ENCODE measurements at regions of chr14 and their contacts with region 1.

Region 1: DNA sequence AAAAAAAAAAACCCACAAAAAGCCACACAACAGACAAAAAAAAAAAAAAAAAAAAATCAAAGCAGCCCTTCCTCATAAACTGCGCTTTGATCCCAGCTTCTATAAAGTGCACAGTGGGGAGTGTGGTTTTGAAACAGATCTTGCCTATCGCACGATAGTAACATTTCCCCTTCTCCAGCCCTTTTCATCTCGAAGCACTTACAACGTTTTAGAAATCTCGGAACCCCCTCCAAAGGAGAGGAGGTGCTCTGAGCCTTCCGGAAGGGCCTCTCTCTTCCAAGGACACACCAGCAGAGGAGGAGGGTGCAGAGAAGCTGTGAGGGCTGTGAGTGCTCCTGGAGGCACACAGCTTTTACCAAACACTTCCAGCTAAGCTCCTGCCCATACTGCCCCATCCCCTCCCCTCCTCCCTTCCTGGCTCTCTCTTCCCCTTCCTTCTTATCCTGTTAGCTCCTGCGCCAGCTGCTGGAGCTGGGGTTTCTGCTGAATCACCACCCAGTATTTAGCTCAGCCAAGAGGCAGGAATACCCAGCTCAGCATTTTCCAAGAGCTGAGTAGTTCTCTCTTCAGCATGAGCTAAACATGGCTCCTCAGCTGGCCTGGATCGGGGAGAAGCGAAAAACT is 28.4 kb downstream of the SLC7A8 start:
- DNase-seq: peak; percentile 74 to 91 (median 79)
- ATAC-seq: peak; percentile 70 to 86 (median 84)
- H3K4me3 ChIP-seq: peak overlapping the region in 9 of 12 donors; percentile 29 to 52 (median 40)
- H3K27ac ChIP-seq: peak overlapping the region; percentile 81 to 96 (median 90)
- H3K4me1 ChIP-seq: peaks cover 6 to 39% (median 30%) of the 10 kb centered on the region in 12 donors
- H3K27me3 ChIP-seq: no peaks in the 10 kb centered on the region
- CTCF ChIP-seq: no peak
- POLR2A ChIP-seq: peak in 1 of 2 donors; percentile 34

Region 2: DNA sequence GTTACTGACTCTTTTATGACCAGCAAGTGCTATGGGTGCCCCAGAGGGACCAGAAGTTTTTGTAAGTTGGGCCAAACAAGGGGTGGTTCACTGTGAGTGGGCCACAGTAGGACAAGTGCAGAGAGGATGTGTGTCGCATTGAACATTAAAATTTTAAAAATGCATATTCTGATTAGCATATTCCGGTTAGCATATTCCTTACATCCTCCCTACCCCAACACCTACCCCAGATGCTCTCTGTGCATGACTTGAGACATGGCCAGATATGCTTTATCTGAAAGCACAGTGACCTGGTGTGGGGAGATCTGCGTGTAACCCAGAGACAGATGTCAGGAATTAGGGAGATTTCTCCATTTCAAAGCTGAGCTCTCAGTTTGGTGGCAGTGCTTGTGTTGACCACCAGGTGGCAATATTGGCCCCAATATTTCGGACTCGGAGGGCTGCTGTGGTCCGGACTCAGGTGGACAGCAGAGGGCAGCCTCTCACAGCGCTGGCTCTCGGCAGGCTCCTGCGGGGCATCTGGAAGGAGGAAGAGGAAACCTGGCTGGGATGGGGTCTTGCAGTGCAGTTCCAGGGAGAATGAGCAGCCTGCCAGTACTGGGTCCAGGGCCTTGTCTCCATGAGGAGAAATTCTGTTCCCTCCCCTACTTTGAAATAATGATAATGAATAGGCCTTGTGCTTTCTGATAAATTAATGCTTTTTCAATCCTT is 34.4 kb before region 1 on chr14:
- intact Hi-C with region 1: loop called in 3 of 10 experiments (anchors 2 to 5 kb)
- DNase-seq: peak; percentile 88 to 94 (median 90)
- ATAC-seq: peak; percentile 75 to 86 (median 80)
- H3K4me3 ChIP-seq: no peak overlapping the region
- H3K27ac ChIP-seq: peak overlapping the region in 5 of 12 donors; percentile 10 to 79 (median 15)
- H3K4me1 ChIP-seq: peaks cover 0 to 31% (median 8%) of the 10 kb centered on the region in 12 donors
- H3K27me3 ChIP-seq: peaks cover 0 to 3% (median 0%) of the 10 kb centered on the region in 9 donors
- CTCF ChIP-seq: peak; percentile 99 to 100 (median 100)
- POLR2A ChIP-seq: no peak

Region 3: DNA sequence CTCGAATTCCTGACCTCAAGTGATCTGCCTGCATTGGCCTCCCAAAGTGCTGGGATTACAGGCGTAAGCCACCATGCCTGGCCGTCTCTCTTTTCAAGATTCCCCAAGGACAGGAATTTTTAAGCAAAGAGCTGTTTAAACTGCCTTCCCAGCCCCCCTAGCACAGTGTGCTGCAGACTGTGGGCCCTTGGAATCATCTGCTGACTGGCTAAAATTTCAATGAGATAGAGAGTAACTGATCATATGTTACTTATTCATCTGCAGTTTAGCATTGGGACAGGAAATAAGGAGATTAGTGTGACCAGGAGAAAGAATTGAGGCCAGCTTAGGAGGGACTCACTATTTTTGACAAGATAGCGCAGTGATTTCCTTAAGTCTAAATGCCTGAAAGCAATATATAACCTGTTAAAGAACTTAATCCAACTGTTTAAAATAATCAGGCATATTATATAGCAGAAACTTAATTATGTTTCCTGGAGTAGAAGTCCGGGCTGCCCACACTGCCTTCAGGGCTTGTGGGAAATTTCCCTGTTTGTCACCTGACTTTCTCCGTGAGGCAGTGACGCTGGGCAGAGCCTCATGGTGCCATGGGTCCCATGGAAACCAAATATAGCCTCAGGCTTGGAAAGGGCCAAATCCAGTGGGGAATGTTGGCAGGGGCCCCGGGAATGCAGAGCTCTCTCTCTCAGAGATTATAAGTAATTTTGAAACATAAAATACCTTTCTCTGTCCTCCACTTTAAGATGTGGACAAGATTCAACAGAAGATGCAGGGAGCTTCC is 13.2 kb before region 1 on chr14:
- intact Hi-C with region 1: loop called in 1 of 10 experiments (anchors 1 kb)
- DNase-seq: peak; percentile 75 to 88 (median 80)
- ATAC-seq: peak; percentile 85 to 95 (median 90)
- H3K4me3 ChIP-seq: no peak overlapping the region
- H3K27ac ChIP-seq: peak overlapping the region; percentile 46 to 84 (median 72)
- H3K4me1 ChIP-seq: peaks cover 0 to 46% (median 15%) of the 10 kb centered on the region in 12 donors
- H3K27me3 ChIP-seq: no peaks in the 10 kb centered on the region
- CTCF ChIP-seq: no peak
- POLR2A ChIP-seq: no peak

Region 4: DNA sequence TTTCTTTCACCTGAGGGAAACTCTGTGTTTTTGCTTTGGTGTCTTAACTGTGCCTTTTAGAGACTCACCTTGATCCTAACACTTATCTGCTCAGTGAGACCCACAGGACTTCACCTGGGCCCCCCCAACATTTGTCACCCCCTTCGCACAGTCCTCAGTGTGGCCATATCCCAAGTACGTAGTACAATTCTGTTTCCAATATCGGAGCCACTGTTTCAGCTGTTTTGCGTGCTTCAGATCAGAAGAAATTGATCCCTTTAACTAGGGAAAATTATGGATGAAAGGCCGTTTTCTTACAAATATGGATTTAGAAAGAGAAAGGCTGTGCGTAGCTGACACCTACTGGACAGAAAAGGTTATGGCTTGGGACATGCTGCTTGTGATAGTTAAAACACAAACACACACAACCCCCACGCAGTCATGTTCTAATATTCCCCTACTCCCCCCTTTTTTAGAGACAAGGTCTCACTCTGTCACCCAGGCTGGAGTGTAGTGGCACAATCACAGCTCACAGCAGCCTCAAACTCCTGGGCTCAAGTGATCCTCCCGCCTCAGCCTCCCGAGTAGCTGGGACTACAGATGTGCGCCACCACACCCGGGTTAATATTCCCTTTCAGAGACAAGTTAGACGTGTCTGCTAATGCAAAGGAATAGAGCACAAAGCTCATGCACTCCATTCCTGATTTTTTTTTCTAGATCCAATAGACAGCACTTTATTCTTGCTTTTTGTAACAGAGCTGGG is 32.0 kb after region 1 on chr14:
- intact Hi-C with region 1: loop called in 1 of 10 experiments (anchors 2 kb)
- DNase-seq: peak in 2 of 5 donors; percentile 24 to 26
- ATAC-seq: peak in 3 of 4 donors; percentile 52 to 72 (median 64)
- H3K4me3 ChIP-seq: no peak overlapping the region
- H3K27ac ChIP-seq: no peak overlapping the region
- H3K4me1 ChIP-seq: peaks cover 0 to 20% (median 5%) of the 10 kb centered on the region in 12 donors
- H3K27me3 ChIP-seq: peaks cover 0 to 3% (median 0%) of the 10 kb centered on the region in 9 donors
- CTCF ChIP-seq: peak; percentile 42 to 83 (median 74)
- POLR2A ChIP-seq: no peak

Region 5: GRCh38 chr14:23227566-23227965 is 72.5 kb after region 1 on chr14:
- intact Hi-C with region 1: no loop called
- DNase-seq: no peak
- ATAC-seq: no peak
- H3K4me3 ChIP-seq: no peak overlapping the region
- H3K27ac ChIP-seq: no peak overlapping the region
- H3K4me1 ChIP-seq: no peaks in the 10 kb centered on the region
- H3K27me3 ChIP-seq: no peaks in the 10 kb centered on the region
- CTCF ChIP-seq: no peak
- POLR2A ChIP-seq: no peak

Region 6: GRCh38 chr14:23320774-23321571 is 165.9 kb after region 1 on chr14 and contains the start of gene PABPN1:
- intact Hi-C with region 1: no loop called
- DNase-seq: peak; percentile 98 to 99 (median 99)
- ATAC-seq: peak; percentile 92 to 97 (median 96)
- H3K4me3 ChIP-seq: peak within 1 kb of the TSS; percentile 84 to 99 (median 92)
- H3K27ac ChIP-seq: peak within 1 kb of the TSS; percentile 89 to 98 (median 97)
- H3K4me1 ChIP-seq: peaks cover 4 to 26% (median 15%) of the 10 kb centered on the region in 12 donors
- H3K27me3 ChIP-seq: no peaks in the 10 kb centered on the region
- CTCF ChIP-seq: no peak
- POLR2A ChIP-seq: peak in 1 of 2 donors; percentile 53
- total RNA-seq, gene PABPN1: 23.7 to 85.1 (median 62.5) TPM

Measured in heart left ventricle (tissue), 16 donors.